ENCODE measurements at regions of chr14 and their contacts with region 1.

Region 1: DNA sequence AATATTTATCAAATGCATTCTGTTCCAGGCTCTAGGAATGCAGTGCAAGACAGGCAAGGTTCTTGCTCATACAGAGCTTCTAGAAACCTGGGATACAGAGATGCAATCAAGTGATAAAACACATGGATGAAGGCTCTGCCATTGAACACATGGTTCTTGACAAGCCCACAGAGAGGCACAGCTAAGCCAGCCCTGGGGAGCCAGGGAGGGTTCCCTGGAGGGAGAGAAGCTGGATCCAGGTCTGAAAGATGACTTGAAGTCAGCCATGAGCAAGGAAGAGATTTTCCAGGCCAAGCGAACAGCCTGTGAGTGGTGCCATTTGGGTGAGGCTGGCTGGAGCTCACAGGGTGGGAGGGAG is 66.2 kb downstream of the IRF2BPL start:
- DNase-seq: no peak
- ATAC-seq: peak; percentile 3
- H3K4me3 ChIP-seq: peak overlapping the region; percentile 44 to 59
- H3K4me3 Mint-ChIP-seq: peak overlapping the region; percentile 84
- H3K27ac ChIP-seq: peak overlapping the region; percentile 63 to 78
- H3K27ac Mint-ChIP-seq: peak overlapping the region; percentile 97
- H3K4me1 ChIP-seq: peaks cover 59% of the 10 kb centered on the region
- H3K4me1 Mint-ChIP-seq: peaks cover 73% of the 10 kb centered on the region
- H3K27me3 ChIP-seq: no peaks in the 10 kb centered on the region
- H3K27me3 Mint-ChIP-seq: no peaks in the 10 kb centered on the region
- CTCF ChIP-seq: no peak

Region 2: GRCh38 chr14:76894308-76894892 is 67.9 kb before region 1 on chr14:
- CTCF ChIA-PET with region 1: no interaction called
- POLR2A ChIA-PET with region 1: no interaction called
- intact Hi-C with region 1: no loop called
- DNase-seq: no peak
- ATAC-seq: no peak
- H3K4me3 ChIP-seq: no peak overlapping the region
- H3K4me3 Mint-ChIP-seq: no peak overlapping the region
- H3K27ac ChIP-seq: no peak overlapping the region
- H3K27ac Mint-ChIP-seq: no peak overlapping the region
- H3K4me1 ChIP-seq: no peaks in the 10 kb centered on the region
- H3K4me1 Mint-ChIP-seq: no peaks in the 10 kb centered on the region
- H3K27me3 ChIP-seq: no peaks in the 10 kb centered on the region
- H3K27me3 Mint-ChIP-seq: no peaks in the 10 kb centered on the region
- CTCF ChIP-seq: no peak

Region 3: DNA sequence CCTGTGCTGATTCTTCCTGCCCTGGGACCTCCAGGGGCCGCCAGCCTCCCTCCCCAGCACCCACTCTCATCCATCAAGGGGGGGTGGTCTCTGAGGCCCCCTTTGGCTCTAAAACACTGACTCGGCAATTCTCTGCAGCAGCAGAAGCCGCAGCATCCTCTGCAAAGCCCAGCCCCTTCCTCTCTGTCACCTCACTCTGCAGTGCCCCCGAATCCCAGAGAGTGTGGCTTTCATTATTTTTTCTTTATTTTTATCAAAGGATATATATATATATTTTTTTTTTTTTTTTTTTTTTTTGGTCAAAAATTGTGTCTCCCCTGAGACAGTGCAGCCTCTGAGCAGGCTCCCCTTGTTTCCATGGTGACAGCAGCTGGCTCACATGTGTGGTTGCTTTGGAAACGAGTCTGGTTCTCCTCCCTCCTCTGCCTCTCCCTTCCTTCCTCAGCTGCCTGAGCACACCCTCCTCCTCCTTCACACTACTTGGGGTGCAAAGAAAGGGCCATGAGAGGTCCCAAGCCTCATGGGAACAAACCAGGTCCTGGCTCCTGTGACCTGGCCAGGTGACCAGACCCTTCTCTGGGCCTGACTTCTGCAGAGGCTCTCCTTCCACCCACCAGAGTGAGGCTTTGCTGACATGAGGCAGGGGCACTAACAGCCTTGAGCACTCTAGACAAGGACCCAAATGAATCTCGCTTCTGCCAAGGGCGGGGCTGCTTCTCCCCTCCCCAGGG is 35.6 kb before region 1 on chr14:
- CTCF ChIA-PET with region 1: interaction called, 5 read pairs
- POLR2A ChIA-PET with region 1: interaction called, 15 read pairs
- intact Hi-C with region 1: loop called (anchors 2 kb)
- DNase-seq: peak; percentile 20 to 89 (median 65)
- ATAC-seq: peak; percentile 57
- H3K4me3 ChIP-seq: peak overlapping the region in 1 of 2 experiments; percentile 54
- H3K4me3 Mint-ChIP-seq: peak overlapping the region; percentile 75
- H3K27ac ChIP-seq: peak overlapping the region; percentile 25 to 63
- H3K27ac Mint-ChIP-seq: peak overlapping the region; percentile 85
- H3K4me1 ChIP-seq: peaks cover 61% of the 10 kb centered on the region
- H3K4me1 Mint-ChIP-seq: peaks cover 76% of the 10 kb centered on the region
- H3K27me3 ChIP-seq: no peaks in the 10 kb centered on the region
- H3K27me3 Mint-ChIP-seq: no peaks in the 10 kb centered on the region
- CTCF ChIP-seq: no peak

Region 4: GRCh38 chr14:76977793-76978720 is 15.8 kb after region 1 on chr14:
- CTCF ChIA-PET with region 1: no interaction called
- POLR2A ChIA-PET with region 1: interaction called, 10 read pairs
- intact Hi-C with region 1: loop called in 1 of 2 experiments (anchors 2 kb)
- DNase-seq: peak; percentile 44 to 94 (median 74)
- ATAC-seq: peak; percentile 95
- H3K4me3 ChIP-seq: no peak overlapping the region
- H3K4me3 Mint-ChIP-seq: peak overlapping the region; percentile 16
- H3K27ac ChIP-seq: peak overlapping the region in 1 of 2 experiments; percentile 8
- H3K27ac Mint-ChIP-seq: peak overlapping the region; percentile 85
- H3K4me1 ChIP-seq: peaks cover 15% of the 10 kb centered on the region
- H3K4me1 Mint-ChIP-seq: peaks cover 15% of the 10 kb centered on the region
- H3K27me3 ChIP-seq: no peaks in the 10 kb centered on the region
- H3K27me3 Mint-ChIP-seq: no peaks in the 10 kb centered on the region
- CTCF ChIP-seq: no peak

Region 5: DNA sequence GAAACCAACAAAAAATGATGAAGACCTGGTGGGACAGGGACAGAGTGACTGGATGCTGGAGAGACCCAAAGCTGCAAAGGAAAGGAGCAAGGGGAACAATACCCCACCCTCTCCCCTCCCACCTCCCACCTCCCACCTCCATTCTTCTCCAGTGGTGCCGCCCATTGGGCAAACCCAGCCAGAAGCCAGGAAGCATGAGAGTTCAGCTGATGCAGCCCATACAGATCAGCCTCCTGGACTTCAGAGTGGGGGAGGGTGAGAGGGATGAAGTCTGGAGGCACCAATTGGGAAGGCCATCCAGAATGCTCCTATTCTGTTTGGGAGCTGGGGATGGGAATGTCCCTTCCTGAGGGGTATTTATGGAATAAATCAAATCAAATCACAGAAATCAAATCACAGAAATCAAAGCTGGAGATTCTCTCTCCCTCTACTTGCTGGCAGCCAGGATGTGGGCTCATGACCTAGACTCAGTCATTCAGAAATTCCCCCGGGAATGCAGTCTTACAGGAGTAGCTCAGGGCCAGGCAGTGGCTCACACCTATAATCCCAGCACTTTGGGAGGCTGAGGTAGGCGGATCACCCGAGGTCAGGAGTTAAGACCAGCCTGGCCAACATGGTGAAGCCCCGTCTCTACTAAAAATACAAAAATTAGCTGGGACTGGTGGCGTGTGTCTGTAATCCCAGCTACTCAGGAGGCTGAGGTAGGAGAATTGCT is 35.1 kb after region 1 on chr14:
- CTCF ChIA-PET with region 1: no interaction called
- POLR2A ChIA-PET with region 1: no interaction called
- intact Hi-C with region 1: no loop called
- DNase-seq: no peak
- ATAC-seq: no peak
- H3K4me3 ChIP-seq: no peak overlapping the region
- H3K4me3 Mint-ChIP-seq: no peak overlapping the region
- H3K27ac ChIP-seq: no peak overlapping the region
- H3K27ac Mint-ChIP-seq: no peak overlapping the region
- H3K4me1 ChIP-seq: no peaks in the 10 kb centered on the region
- H3K4me1 Mint-ChIP-seq: peaks cover 7% of the 10 kb centered on the region
- H3K27me3 ChIP-seq: no peaks in the 10 kb centered on the region
- H3K27me3 Mint-ChIP-seq: peaks cover 3% of the 10 kb centered on the region
- CTCF ChIP-seq: no peak

Region 6: DNA sequence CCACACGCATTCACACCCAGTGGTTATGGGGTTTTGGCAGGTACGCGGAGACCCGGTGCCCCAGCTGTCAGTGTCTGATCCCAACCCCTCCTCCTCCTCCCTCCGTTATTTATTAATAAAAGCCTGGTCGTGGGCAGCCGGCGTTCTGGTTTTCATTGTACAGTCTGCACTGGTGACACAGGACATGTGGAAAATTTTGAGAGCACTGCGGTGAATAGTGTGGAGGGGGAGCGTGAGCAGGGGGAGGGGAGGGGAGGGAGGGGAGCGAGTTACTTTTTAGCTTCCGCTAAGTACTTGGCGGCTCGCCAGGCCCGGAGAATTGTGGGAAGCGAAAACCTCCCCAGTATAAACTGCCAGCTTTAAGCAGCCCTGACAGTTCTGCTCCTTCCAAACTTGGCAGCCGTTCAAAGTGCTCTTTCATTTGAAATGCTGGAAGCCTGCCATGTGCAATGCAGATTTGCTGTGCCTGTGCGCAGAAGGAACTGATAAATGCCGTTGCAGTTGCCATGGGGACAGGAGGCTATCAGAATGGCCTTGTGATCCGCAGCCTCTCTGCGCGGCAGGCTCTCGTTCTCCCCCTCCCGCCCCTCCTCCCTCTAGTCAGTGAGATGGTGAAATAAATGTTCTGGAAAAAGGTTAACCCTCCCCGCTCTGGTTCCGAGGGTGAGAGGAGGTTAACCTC is 77.9 kb after region 1 on chr14:
- CTCF ChIA-PET with region 1: interaction called, 11 read pairs
- POLR2A ChIA-PET with region 1: interaction called, 29 read pairs
- intact Hi-C with region 1: loop called in 1 of 2 experiments (anchors 1 kb)
- DNase-seq: peak; percentile 94 to 100 (median 99)
- ATAC-seq: peak; percentile 77
- H3K4me3 ChIP-seq: peak overlapping the region; percentile 42 to 47
- H3K4me3 Mint-ChIP-seq: peak overlapping the region; percentile 86
- H3K27ac ChIP-seq: peak overlapping the region; percentile 90 to 94
- H3K27ac Mint-ChIP-seq: peak overlapping the region; percentile 99
- H3K4me1 ChIP-seq: peaks cover 74% of the 10 kb centered on the region
- H3K4me1 Mint-ChIP-seq: peaks cover 90% of the 10 kb centered on the region
- H3K27me3 ChIP-seq: no peaks in the 10 kb centered on the region
- H3K27me3 Mint-ChIP-seq: no peaks in the 10 kb centered on the region
- CTCF ChIP-seq: no peak